Caco-2 (cell line): ENCODE measurements at regions of chr10 and their contacts with region 1.

Region 1: DNA sequence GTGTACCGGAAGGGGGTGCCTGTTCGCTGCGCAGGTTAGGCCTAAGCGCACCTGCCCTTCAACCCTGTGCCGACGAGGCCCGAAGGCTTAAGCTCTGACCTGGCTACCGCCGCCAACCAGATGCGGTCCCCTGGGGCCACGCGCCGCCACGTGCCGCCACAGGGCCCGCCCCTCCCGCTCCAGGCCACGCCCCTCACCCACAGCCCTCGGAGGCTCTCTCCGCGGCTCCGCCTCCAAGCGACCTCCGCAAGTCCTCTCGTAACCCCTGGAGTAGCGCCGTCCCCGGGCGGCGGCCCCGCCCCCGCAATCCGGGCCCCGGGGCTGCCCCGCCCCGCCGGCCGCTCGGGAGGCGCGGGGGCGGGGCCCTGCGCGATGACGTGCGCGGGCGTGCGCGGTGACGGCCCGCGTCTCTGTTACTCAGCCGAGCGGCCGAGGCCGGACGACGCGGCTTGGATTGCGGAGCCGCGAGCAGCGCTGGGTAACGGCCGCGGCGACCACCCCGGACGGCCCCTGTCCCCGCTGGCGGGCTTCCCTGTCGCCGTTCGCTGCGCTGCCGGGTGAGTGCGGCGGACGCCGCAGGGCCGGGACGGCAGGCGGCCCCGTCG is at the start of gene MAPK8:
- DNase-seq: peak; percentile 98 to 100
- H3K4me3 ChIP-seq: peak within 1 kb of the TSS; percentile 88
- H3K4me3 Mint-ChIP-seq: peak within 1 kb of the TSS; percentile 81
- H3K27ac Mint-ChIP-seq: peak within 1 kb of the TSS; percentile 47
- H3K4me1 ChIP-seq: peaks cover 21% of the 10 kb centered on the region
- H3K4me1 Mint-ChIP-seq: peaks cover 9% of the 10 kb centered on the region
- H3K27me3 ChIP-seq: no peaks in the 10 kb centered on the region
- H3K27me3 Mint-ChIP-seq: peaks cover 7% of the 10 kb centered on the region
- CTCF ChIP-seq: no peak
- total RNA-seq, gene MAPK8: 76.1 and 83.3 TPM in 2 replicates

Region 2: GRCh38 chr10:48215488-48216204 is 90.7 kb before region 1 on chr10:
- CTCF ChIA-PET with region 1: no interaction called
- POLR2A ChIA-PET with region 1: no interaction called
- intact Hi-C with region 1: loop called (anchors 5 kb)
- DNase-seq: peak; percentile 70 to 82
- H3K4me3 ChIP-seq: no peak overlapping the region
- H3K4me3 Mint-ChIP-seq: no peak overlapping the region
- H3K27ac Mint-ChIP-seq: no peak overlapping the region
- H3K4me1 ChIP-seq: no peaks in the 10 kb centered on the region
- H3K4me1 Mint-ChIP-seq: no peaks in the 10 kb centered on the region
- H3K27me3 ChIP-seq: no peaks in the 10 kb centered on the region
- H3K27me3 Mint-ChIP-seq: peaks cover 30% of the 10 kb centered on the region
- CTCF ChIP-seq: peak; percentile 94 to 95

Region 3: DNA sequence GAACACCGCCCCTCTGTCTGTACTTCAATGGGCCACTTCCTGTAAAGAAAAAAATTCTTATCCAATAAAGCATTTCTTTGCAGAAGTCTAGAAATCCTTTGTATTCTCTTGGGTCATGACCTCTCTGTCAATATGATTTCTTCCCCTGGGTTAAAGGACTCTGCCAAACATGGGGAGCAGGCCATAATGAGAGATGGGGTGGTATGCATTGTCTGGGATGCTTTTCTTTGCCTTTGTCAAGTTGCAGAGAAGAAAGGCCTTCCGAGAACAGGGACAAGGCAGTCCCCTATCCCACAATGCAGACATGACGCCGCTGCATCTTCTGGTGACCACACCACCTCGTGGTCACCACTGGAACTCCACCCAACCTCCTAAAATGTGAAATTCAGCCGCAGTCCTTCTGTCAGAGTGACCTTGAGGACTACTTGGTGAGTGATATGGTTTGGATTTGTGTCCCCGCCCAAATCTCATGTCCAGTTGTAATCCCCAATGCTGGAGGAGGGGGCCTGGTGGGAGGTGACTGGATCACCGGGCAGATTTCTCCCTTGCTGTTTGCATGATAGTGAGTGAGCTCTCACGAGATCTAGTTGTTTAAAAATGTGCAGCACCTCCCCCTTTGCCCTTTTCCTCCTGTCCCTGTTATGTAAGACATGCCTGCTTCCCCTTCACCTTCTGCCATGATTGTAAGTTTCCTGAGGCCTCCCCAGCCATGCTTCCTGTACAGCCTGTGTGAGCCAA is 16.7 kb before region 1 on chr10:
- CTCF ChIA-PET with region 1: interaction called, 3 read pairs
- POLR2A ChIA-PET with region 1: no interaction called
- intact Hi-C with region 1: loop called (anchors 1 kb)
- DNase-seq: peak; percentile 66 to 81
- H3K4me3 ChIP-seq: no peak overlapping the region
- H3K4me3 Mint-ChIP-seq: no peak overlapping the region
- H3K27ac Mint-ChIP-seq: no peak overlapping the region
- H3K4me1 ChIP-seq: no peaks in the 10 kb centered on the region
- H3K4me1 Mint-ChIP-seq: peaks cover 9% of the 10 kb centered on the region
- H3K27me3 ChIP-seq: no peaks in the 10 kb centered on the region; the same call in 1 of the 2 replicates
- H3K27me3 Mint-ChIP-seq: peaks cover 11% of the 10 kb centered on the region
- CTCF ChIP-seq: peak; percentile 96

Region 4: GRCh38 chr10:48317321-48317990 is 11.1 kb after region 1 on chr10:
- CTCF ChIA-PET with region 1: interaction called, 10 read pairs
- POLR2A ChIA-PET with region 1: no interaction called
- intact Hi-C with region 1: loop called (anchors 1 kb)
- DNase-seq: no peak
- H3K4me3 ChIP-seq: no peak overlapping the region
- H3K4me3 Mint-ChIP-seq: no peak overlapping the region
- H3K27ac Mint-ChIP-seq: no peak overlapping the region
- H3K4me1 ChIP-seq: peaks cover 11% of the 10 kb centered on the region
- H3K4me1 Mint-ChIP-seq: no peaks in the 10 kb centered on the region
- H3K27me3 ChIP-seq: no peaks in the 10 kb centered on the region
- H3K27me3 Mint-ChIP-seq: no peaks in the 10 kb centered on the region
- CTCF ChIP-seq: no peak

Region 5: GRCh38 chr10:48333856-48334255 is 27.5 kb after region 1 on chr10:
- CTCF ChIA-PET with region 1: interaction called, 10 read pairs
- POLR2A ChIA-PET with region 1: no interaction called
- intact Hi-C with region 1: loop called (anchors 1 kb)
- DNase-seq: no peak
- H3K4me3 ChIP-seq: no peak overlapping the region
- H3K4me3 Mint-ChIP-seq: no peak overlapping the region
- H3K27ac Mint-ChIP-seq: no peak overlapping the region
- H3K4me1 ChIP-seq: peaks cover 13% of the 10 kb centered on the region
- H3K4me1 Mint-ChIP-seq: peaks cover 17% of the 10 kb centered on the region
- H3K27me3 ChIP-seq: no peaks in the 10 kb centered on the region
- H3K27me3 Mint-ChIP-seq: no peaks in the 10 kb centered on the region
- CTCF ChIP-seq: no peak

Region 6: DNA sequence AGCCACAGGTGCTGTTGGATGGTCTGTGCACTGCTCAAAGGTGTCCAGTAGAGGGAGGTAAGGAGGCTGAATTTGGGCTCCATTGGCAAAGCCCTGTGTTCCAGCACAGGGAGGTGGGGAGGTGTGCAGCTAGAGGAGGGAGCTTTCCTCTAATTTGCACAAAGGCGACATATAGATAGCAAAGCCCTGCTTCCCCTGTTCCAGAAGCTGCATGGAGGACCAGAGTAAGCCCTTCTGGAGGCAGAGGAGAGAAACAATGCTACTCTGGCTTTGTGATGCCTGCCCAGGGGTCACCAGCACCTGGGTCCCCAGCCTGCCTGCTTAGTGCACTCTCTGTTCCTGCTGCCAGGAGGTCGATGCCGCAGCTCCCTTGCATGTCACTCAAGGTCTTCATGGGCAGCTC is 301.9 kb after region 1 on chr10:
- CTCF ChIA-PET with region 1: no interaction called
- POLR2A ChIA-PET with region 1: no interaction called
- intact Hi-C with region 1: loop called (anchors 5 kb)
- DNase-seq: peak; percentile 66 to 73
- H3K4me3 ChIP-seq: no peak overlapping the region
- H3K4me3 Mint-ChIP-seq: no peak overlapping the region
- H3K27ac Mint-ChIP-seq: no peak overlapping the region
- H3K4me1 ChIP-seq: 0 out of 2 replicates have a peak, but pooled peaks cover 6% of the 10 kb centered on the region
- H3K4me1 Mint-ChIP-seq: peaks cover 6% of the 10 kb centered on the region
- H3K27me3 ChIP-seq: 0 out of 2 replicates have a peak, but pooled peaks cover 4% of the 10 kb centered on the region
- H3K27me3 Mint-ChIP-seq: peaks cover 17% of the 10 kb centered on the region
- CTCF ChIP-seq: peak; percentile 80 to 93